Breast epithelium (tissue), 4 donors: ENCODE measurements at regions of chr19 and their contacts with region 1.

Region 1: DNA sequence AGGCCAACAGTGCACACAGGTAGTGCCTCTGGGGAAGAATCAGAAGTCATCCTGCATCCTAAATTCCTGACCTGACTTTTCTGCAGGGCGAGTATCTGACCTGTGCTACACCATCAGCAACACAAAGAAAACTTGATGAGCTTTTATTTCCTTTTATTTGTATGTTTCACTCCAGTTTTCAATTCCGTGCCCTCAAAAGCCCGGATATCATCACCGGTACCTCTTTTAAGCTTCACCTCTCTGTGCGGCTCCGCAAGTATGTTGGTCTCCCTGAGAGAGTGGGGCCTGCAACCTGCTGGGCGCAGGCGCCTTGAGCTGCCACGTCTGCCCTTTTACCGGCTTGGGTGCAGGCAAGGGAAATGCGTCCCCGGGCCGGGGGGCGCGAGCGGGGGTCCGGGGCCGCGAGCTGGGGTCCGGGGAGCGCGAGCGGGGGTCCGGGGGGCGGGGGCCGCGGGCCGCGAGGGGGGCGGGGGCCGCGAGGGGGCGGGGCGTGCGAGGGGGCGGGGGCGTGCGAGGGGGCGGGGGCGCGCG is 4.3 kb upstream of the DUXA start:
- DNase-seq: peak in 1 of 2 donors; percentile 34
- H3K4me3 ChIP-seq: peak overlapping the region; percentile 32 to 68 (median 48)
- H3K27ac ChIP-seq: peak overlapping the region; percentile 54 to 75
- H3K4me1 ChIP-seq: no peaks in the 10 kb centered on the region
- H3K27me3 ChIP-seq: no peaks in the 10 kb centered on the region
- CTCF ChIP-seq: no peak
- POLR2A ChIP-seq: no peak

Region 2: GRCh38 chr19:57141699-57142098 is 29.9 kb before region 1 on chr19:
- intact Hi-C with region 1: loop called (anchors 2 kb)
- DNase-seq: no peak
- H3K4me3 ChIP-seq: no peak overlapping the region
- H3K27ac ChIP-seq: no peak overlapping the region
- H3K4me1 ChIP-seq: no peaks in the 10 kb centered on the region
- H3K27me3 ChIP-seq: no peaks in the 10 kb centered on the region
- CTCF ChIP-seq: no peak
- POLR2A ChIP-seq: no peak

Region 3: DNA sequence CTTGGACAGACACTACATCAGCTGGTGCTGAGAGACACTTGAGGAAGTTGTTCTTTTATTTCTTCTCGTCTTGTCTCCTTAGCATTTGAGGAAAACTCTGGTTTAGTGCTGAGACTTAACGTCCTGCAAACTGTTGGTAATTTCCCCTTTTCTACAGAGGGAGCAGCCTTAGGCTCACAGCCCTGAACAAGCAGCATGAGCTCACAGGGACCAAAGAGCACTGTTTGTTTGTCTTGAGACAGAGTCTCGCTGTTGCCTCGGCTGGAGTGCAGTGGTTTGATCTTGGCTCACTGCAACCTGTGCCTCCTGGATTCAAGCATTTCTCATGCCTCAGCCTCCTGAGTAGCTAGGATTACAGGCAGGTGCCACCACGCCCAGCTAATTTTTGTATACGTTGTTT is 74.3 kb after region 1 on chr19:
- intact Hi-C with region 1: no loop called
- DNase-seq: no peak
- H3K4me3 ChIP-seq: no peak overlapping the region
- H3K27ac ChIP-seq: no peak overlapping the region
- H3K4me1 ChIP-seq: peaks cover 4 to 9% of the 10 kb centered on the region in 2 donors
- H3K27me3 ChIP-seq: no peaks in the 10 kb centered on the region
- CTCF ChIP-seq: no peak
- POLR2A ChIP-seq: no peak

Region 4: DNA sequence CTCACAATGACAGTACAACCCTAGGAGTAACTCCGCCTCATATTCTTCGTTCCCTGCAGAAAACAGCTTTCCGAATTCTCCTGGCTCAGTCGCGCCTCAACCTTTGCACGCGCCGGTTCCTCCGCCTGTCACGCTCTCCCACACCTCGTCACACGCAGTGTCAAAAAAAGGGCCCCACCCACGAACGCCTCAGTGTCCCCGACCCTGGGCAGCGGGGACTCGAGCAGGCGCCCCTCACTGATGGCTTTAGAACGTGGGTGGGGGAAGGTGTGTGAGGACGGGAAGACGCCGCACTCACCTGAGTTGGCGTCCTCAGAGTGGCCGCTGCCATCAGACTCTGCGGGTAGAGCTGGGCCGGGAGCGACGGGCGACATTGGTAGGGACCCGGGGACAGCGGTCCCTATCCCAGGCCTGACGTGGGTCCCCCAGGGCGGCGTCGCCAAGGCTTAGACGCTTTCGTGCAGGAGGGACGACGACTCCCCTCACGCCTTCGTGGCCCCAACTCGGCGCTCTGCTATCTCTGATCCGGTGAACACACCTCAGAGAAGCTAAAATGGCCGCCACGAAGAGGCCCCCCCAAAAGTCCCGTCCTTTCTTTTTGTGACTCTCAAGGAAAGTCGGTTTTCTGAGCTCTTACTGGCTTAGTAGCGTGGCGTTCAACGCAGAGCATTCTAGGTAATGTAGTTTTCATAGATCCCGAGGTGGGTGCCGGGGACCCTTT is 537.2 kb after region 1 on chr19 and contains the start of gene ZNF154:
- intact Hi-C with region 1: no loop called
- DNase-seq: peak in 1 of 2 donors; percentile 26
- H3K4me3 ChIP-seq: peak within 1 kb of the TSS; percentile 24 to 80 (median 62)
- H3K27ac ChIP-seq: peak within 1 kb of the TSS; percentile 88 to 92
- H3K4me1 ChIP-seq: no peaks in the 10 kb centered on the region
- H3K27me3 ChIP-seq: no peaks in the 10 kb centered on the region
- CTCF ChIP-seq: no peak
- POLR2A ChIP-seq: no peak
- total RNA-seq, gene ZNF154: 0.96 to 7.8 (median 6.2) TPM